Ascending aorta (tissue), 2 donors: ENCODE measurements at regions of chr21 and their contacts with region 1.

Region 1: GRCh38 chr21:29091032-29091431 is 17.6 kb upstream of the CCT8 start:
- DNase-seq: no peak
- H3K4me3 ChIP-seq: no peak overlapping the region
- H3K27ac ChIP-seq: no peak overlapping the region
- H3K4me1 ChIP-seq: peaks cover 0 to 5% of the 10 kb centered on the region in 2 donors
- H3K27me3 ChIP-seq: no peaks in the 10 kb centered on the region
- CTCF ChIP-seq: no peak

Region 2: GRCh38 chr21:29372063-29372802 is 281.2 kb after region 1 on chr21:
- intact Hi-C with region 1: loop called (anchors 1 kb)
- DNase-seq: peak in 1 of 2 donors; percentile 76
- H3K4me3 ChIP-seq: no peak overlapping the region
- H3K27ac ChIP-seq: no peak overlapping the region
- H3K4me1 ChIP-seq: no peaks in the 10 kb centered on the region
- H3K27me3 ChIP-seq: no peaks in the 10 kb centered on the region
- CTCF ChIP-seq: peak; percentile 76 to 81 (median 80)

Region 3: DNA sequence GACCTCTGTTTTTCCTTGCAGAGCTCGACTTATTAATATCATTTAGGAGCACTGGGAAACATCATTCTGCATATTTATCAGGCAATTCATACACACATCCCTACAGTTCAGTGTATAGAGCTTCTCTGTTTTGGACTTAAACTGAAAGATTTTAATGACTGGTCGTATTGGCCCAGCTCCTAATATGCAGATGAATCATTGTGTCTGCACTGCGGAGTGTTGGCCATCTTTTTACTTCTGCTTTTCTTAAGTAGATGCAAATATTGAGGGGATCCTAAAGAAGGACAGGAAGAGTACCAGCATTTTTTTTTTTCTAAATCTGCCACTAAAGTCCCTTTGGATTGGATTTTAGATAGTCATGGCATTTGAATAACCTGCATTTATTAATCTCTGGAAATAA is 362.5 kb after region 1 on chr21:
- intact Hi-C with region 1: no loop called
- DNase-seq: no peak
- H3K4me3 ChIP-seq: no peak overlapping the region
- H3K27ac ChIP-seq: no peak overlapping the region
- H3K4me1 ChIP-seq: no peaks in the 10 kb centered on the region
- H3K27me3 ChIP-seq: no peaks in the 10 kb centered on the region
- CTCF ChIP-seq: no peak